ENCODE measurements at regions of chr6 and their contacts with region 1.

Region 1: DNA sequence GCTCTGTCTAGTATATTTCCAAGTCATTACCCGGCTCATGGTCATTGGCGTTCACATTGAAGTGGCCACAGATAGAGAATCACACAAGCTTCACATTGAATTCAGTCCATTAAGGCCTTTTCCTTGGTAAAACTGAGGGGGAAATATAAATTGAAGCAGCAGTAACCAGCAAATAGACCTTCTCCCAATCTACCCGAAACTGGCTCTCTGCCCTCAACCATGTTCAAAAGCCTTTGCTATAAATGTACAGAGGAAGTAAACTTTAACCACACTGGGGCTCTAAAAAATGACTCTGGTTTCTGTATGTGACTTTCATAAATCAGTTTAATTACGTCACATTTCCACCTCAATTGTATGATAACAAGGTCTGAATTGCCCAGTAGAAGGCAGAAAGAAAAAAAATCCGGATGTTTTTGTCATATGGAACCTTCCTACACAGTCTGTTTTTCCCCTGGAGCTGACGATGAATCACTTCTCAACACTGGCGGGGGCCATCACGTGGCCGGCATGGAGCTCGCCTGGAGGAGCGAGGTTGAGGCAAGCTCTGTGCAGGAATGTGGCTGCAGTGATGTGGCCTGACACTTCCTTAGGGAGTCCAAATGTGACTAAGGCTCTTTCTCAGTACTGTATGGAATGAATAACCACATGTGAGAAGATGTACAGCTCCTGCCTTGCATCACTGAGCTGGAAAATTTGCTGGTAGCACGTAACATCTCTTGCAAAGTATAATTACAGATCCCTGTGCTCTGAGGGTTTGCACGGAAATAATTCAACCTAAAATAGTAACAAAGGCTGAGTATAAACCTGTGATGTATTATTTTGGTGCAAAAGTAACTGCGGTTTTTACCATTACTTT is 58.6 kb upstream of the SNX9 start:
- H3K4me3 Mint-ChIP-seq: peak overlapping the region; percentile 13
- H3K27ac Mint-ChIP-seq: peak overlapping the region; percentile 87
- H3K4me1 Mint-ChIP-seq: peaks cover 92% of the 10 kb centered on the region
- H3K27me3 Mint-ChIP-seq: peaks cover 4% of the 10 kb centered on the region

Region 2: DNA sequence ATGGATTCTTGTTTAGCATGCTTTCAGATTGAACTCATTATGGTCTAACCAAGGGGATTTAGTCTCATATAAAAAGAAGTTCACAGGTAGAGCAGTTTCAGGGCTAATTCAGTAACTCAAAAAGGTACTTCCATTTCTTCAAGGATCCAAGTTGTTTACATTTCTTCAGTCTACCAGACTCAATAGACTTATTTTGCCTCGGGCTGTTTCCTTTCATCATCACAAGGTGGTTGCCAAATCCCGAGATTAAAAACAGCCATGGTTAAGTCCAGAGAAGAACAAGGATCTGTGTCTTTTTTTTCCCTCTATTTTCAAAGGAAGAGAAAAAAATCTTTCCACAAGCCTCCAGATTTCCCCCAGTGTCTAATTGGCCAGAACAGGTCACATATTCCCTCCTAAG is 11.1 kb before region 1 on chr6:
- intact Hi-C with region 1: no loop called
- H3K4me3 Mint-ChIP-seq: no peak overlapping the region
- H3K27ac Mint-ChIP-seq: no peak overlapping the region
- H3K4me1 Mint-ChIP-seq: peaks cover 23% of the 10 kb centered on the region
- H3K27me3 Mint-ChIP-seq: peaks cover 24% of the 10 kb centered on the region

Region 3: DNA sequence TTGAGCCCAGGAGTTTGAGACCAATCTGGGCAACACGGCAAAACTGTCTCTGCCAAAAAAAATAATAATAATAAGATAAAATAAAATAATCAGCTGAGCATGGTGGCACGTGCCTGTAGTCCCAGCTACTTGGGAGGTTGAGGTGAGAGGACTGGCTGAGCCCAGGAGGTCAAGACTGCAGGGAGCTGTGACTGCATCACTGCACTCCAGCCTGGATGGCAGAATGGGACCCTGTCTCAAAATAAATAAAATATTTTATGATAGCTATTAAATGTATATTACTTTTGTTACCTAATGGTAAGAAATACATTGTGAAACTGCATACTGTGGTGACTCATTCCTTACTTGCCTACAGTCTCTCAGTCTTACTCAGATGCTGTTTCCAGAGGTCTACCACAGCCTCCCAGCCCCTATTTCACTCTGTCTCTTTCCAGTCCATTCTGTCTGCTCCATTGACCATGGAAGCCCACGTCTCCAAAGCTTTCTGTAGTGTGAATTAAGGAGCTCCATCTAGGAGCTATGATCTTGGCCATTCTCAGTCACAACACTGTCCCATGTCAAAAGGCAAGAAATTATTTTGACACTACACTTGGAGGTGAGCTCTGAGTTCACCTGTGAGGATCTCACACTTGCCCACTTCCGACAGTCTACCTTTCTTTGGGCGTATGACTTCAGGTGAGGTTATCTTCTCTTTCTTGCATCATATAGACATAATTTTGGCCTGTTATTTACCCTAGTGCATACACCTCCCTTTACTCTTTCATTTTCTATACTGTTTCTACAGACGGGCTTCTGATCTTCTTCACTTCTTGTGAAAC is 36.2 kb after region 1 on chr6:
- intact Hi-C with region 1: loop called (anchors 5 kb)
- H3K4me3 Mint-ChIP-seq: no peak overlapping the region
- H3K27ac Mint-ChIP-seq: no peak overlapping the region
- H3K4me1 Mint-ChIP-seq: peaks cover 36% of the 10 kb centered on the region
- H3K27me3 Mint-ChIP-seq: no peaks in the 10 kb centered on the region

Region 4: GRCh38 chr6:157823528-157824370 is 59.3 kb after region 1 on chr6:
- intact Hi-C with region 1: loop called (anchors 1 kb)
- H3K4me3 Mint-ChIP-seq: peak overlapping the region; percentile 81
- H3K27ac Mint-ChIP-seq: peak overlapping the region; percentile 90
- H3K4me1 Mint-ChIP-seq: peaks cover 34% of the 10 kb centered on the region
- H3K27me3 Mint-ChIP-seq: peaks cover 23% of the 10 kb centered on the region

Region 5: DNA sequence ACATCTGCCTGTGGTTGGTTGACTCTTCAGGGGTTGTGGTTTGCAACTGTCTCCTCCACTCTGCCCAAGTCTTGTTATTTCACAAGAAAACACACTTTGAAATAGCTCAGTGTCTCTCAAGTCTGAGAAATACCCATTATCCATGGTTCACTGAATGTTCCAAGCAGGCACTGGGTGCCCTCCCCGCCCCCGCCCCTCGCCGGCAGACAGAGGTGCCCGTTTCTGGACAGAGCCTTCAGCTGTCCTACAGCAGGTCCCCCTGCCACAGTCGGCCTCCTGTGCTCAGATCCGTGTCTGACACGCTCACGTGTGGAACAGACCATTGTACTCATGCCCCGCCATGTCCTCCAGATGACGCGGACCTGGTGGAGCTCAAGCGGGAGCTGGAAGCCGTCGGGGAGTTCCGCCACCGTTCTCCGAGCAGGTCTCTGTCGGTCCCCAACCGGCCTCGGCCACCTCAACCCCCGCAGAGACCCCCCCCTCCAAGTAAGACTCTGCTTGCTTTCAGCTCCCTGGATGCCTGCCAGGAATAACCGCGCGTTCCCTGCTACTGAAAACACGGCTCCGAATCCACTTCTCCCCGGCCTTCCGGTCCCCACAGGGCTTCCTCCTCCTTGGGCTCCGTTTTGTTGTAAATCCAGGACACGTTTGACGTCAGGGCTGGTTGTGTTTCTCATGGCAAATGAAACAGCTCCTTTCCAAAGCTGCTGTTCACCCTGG is 322.3 kb after region 1 on chr6:
- intact Hi-C with region 1: loop called (anchors 10 kb)
- H3K4me3 Mint-ChIP-seq: peak overlapping the region; percentile 79
- H3K27ac Mint-ChIP-seq: peak overlapping the region; percentile 96
- H3K4me1 Mint-ChIP-seq: peaks cover 54% of the 10 kb centered on the region
- H3K27me3 Mint-ChIP-seq: no peaks in the 10 kb centered on the region